B cell (primary cell): ENCODE measurements at regions of chr2 and their contacts with region 1.

Region 1: GRCh38 chr2:26959331-26959730 is 11.1 kb upstream of the MAPRE3 start:
- DNase-seq: no peak
- ATAC-seq: no peak
- H3K4me3 ChIP-seq: no peak overlapping the region
- H3K4me3 Mint-ChIP-seq: no peak overlapping the region
- H3K27ac ChIP-seq: no peak overlapping the region
- H3K27ac Mint-ChIP-seq: no peak overlapping the region
- H3K4me1 ChIP-seq: no peaks in the 10 kb centered on the region
- H3K4me1 Mint-ChIP-seq: no peaks in the 10 kb centered on the region
- H3K27me3 ChIP-seq: peaks cover 0 to 16% (median 4%) of the 10 kb centered on the region in 4 experiments
- H3K27me3 Mint-ChIP-seq: peaks cover 37% of the 10 kb centered on the region
- CTCF ChIP-seq: no peak

Region 2: GRCh38 chr2:27024188-27024587 is 64.9 kb after region 1 on chr2:
- CTCF ChIA-PET with region 1: interaction called, 145 read pairs
- POLR2A ChIA-PET with region 1: no interaction called
- intact Hi-C with region 1: no loop called
- DNase-seq: no peak
- ATAC-seq: no peak
- H3K4me3 ChIP-seq: no peak overlapping the region
- H3K4me3 Mint-ChIP-seq: no peak overlapping the region
- H3K27ac ChIP-seq: no peak overlapping the region
- H3K27ac Mint-ChIP-seq: no peak overlapping the region
- H3K4me1 ChIP-seq: no peaks in the 10 kb centered on the region
- H3K4me1 Mint-ChIP-seq: no peaks in the 10 kb centered on the region
- H3K27me3 ChIP-seq: no peaks in the 10 kb centered on the region
- H3K27me3 Mint-ChIP-seq: no peaks in the 10 kb centered on the region
- CTCF ChIP-seq: no peak

Region 3: GRCh38 chr2:27071277-27071989 is 112.1 kb after region 1 on chr2 and contains the start of gene OST4:
- CTCF ChIA-PET with region 1: interaction called, 7 read pairs
- POLR2A ChIA-PET with region 1: interaction called, 4 read pairs
- intact Hi-C with region 1: loop called (anchors 1 kb)
- DNase-seq: peak; percentile 93
- ATAC-seq: peak; percentile 95
- H3K4me3 ChIP-seq: peak within 1 kb of the TSS; percentile 79 to 91 (median 88)
- H3K4me3 Mint-ChIP-seq: peak within 1 kb of the TSS; percentile 99
- H3K27ac ChIP-seq: peak within 1 kb of the TSS; percentile 64 to 87
- H3K27ac Mint-ChIP-seq: peak within 1 kb of the TSS; percentile 95
- H3K4me1 ChIP-seq: peaks cover 35 to 43% of the 10 kb centered on the region in 2 donors
- H3K4me1 Mint-ChIP-seq: peaks cover 62% of the 10 kb centered on the region
- H3K27me3 ChIP-seq: no peaks in the 10 kb centered on the region
- H3K27me3 Mint-ChIP-seq: no peaks in the 10 kb centered on the region
- CTCF ChIP-seq: no peak
- total RNA-seq, gene OST4: 195 and 199 TPM in 2 replicates

Region 4: DNA sequence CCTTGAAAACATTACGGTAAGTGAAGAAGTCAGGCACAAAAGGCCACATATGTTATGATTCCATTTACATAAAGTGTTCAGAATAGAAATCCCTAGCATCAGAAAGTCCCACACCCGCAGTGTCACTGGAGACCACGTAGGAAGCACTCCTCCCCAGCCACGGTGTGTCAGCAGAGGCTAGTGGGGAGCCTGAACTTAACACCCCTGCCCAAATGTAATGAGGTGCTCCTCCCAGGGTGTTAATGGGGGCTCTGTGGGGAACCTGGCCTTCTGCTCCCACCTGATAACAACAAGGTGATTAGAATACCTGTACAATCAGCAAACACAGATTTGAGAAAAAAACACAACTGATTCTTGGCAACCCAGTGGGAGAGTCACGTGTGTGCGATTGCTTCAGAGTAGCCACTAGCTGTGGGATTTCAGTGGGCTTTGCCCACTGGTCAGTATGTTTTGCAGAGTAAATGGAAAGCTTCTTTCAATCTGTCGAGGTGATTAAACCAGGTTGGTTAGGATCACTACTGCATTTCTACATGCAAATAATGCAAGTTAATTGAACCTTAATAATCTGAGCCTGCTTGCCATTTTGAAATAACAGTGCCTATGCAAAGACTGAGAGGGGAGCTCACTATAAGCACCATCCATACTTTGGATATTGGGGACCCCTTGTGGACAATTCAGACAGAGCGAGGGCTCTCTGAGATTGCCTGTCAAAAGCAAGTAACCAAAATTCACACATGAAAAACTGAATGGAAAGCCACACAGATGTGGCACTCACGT is 231.9 kb after region 1 on chr2:
- CTCF ChIA-PET with region 1: interaction called, 71 read pairs
- POLR2A ChIA-PET with region 1: no interaction called
- intact Hi-C with region 1: no loop called
- DNase-seq: peak; percentile 74
- ATAC-seq: peak; percentile 73
- H3K4me3 ChIP-seq: no peak overlapping the region
- H3K4me3 Mint-ChIP-seq: no peak overlapping the region
- H3K27ac ChIP-seq: no peak overlapping the region
- H3K27ac Mint-ChIP-seq: no peak overlapping the region
- H3K4me1 ChIP-seq: no peaks in the 10 kb centered on the region
- H3K4me1 Mint-ChIP-seq: no peaks in the 10 kb centered on the region
- H3K27me3 ChIP-seq: no peaks in the 10 kb centered on the region
- H3K27me3 Mint-ChIP-seq: no peaks in the 10 kb centered on the region
- CTCF ChIP-seq: peak; percentile 74

Region 5: DNA sequence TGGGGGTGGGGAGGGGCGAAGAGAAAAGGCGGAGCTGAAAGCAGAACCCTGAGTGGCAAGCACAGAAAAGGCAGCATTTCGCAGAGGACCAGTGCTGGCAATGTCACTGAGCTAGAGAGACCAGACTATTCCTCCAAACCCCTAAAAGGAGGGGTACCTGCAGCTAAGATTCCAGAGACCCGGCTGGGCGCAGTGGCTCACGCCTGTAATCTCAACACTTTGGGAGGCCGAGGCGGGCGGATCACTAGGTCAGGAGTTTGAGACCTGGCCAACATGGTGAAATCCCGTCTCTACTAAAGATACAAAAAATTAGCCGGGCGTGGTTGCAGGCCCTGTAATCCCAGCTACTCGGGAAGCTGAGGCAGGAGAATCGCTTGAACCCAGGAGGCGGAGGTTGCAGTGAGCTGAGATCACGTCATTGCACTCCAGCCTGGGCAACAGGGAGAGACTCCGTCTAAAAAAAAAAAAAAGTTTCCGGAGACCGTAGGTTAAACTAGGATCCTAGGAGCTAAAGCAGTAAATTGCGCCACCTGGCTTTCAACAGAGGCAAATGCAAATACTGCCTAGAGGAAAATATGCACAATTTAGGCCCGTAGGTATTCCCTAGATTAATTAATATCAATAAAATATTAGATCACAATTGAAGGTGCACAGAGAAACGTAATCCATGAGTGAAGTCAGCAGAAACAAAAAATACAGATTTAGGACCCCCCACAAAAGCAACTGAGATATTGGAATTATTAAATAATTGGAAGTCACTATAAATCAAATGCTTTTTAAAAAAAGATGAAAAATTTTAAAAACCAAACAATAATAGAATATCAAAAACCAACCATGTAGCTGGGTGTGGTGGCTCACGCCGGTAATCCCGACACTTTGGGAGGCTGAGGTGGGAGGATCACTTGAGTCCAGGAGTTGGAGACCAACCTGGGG is 344.0 kb after region 1 on chr2:
- CTCF ChIA-PET with region 1: interaction called, 56 read pairs
- POLR2A ChIA-PET with region 1: no interaction called
- intact Hi-C with region 1: loop called (anchors 1 kb)
- DNase-seq: peak; percentile 70
- ATAC-seq: peak; percentile 74
- H3K4me3 ChIP-seq: peak overlapping the region in 4 of 5 experiments; percentile 7 to 38 (median 26)
- H3K4me3 Mint-ChIP-seq: peak overlapping the region; percentile 74
- H3K27ac ChIP-seq: peak overlapping the region in 1 of 2 donors; percentile 26
- H3K27ac Mint-ChIP-seq: peak overlapping the region; percentile 71
- H3K4me1 ChIP-seq: peaks cover 14 to 22% of the 10 kb centered on the region in 2 donors
- H3K4me1 Mint-ChIP-seq: peaks cover 11% of the 10 kb centered on the region
- H3K27me3 ChIP-seq: peaks cover 0 to 36% (median 10%) of the 10 kb centered on the region in 4 experiments
- H3K27me3 Mint-ChIP-seq: peaks cover 26% of the 10 kb centered on the region
- CTCF ChIP-seq: peak; percentile 96